A549 (cell line): ENCODE measurements at regions of chr7 and their contacts with region 1.

Region 1: GRCh38 chr7:35985126-35985754 is 167.8 kb upstream of the EEPD1 start:
- DNase-seq: peak; percentile 71 to 77
- ATAC-seq: peak; percentile 96 to 99
- H3K4me3 ChIP-seq: no peak overlapping the region
- H3K27ac ChIP-seq: peak overlapping the region; percentile 54 to 75; a peak in 4 of 6 replicates
- H3K4me1 ChIP-seq: peaks cover 3% of the 10 kb centered on the region; the same call in 1 of the 3 replicates
- CTCF ChIP-seq: peak; percentile 92
- EP300 ChIP-seq: no peak
- POLR2A ChIP-seq: no peak
- RAD21 ChIP-seq: peak; percentile 100

Region 2: DNA sequence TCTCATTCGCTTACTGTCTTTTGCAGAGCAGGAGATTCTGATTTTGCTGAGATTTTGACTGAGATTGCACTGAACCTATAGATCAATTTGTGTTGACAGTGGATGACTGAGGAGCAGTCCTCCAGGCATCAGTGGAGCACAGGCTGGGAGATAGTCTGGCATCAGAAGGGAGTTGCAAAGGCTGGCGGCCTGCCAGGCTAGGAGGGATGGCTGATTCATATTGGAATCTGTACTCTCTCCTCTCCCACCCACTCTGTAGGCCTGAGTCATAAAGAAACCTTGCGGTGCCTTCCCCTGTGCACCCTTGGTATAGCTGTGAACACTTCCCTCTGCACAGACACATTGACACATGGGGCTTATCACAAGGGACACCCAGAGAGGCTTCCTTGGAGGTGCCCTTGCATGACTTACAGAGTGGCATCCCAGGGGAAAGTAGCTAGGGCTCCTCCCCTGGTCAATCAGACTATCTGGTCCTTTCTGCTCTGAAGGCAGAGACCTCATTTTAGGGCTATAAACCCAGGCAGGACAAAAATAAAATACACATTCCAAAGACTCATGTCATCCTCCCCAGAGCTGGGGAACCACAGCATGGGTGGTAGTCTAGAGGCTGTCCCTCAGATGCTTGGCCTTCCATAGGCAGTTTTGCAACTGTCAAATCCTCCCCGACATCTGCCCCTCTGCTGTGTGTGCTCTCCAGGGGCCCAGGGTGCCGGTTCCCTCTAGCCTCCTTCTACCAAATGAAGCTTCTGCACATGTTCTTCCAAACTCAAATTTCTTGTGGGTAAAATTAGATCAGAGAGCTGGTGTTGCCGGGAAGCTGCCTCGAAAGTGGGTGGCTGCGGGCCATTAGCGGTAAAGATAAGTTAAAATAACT is 130.4 kb after region 1 on chr7:
- CTCF ChIA-PET with region 1: interaction called, 11 read pairs
- POLR2A ChIA-PET with region 1: no interaction called
- DNase-seq: peak; percentile 84 to 95
- ATAC-seq: peak; percentile 97 to 98
- H3K4me3 ChIP-seq: no peak overlapping the region
- H3K27ac ChIP-seq: peak overlapping the region; percentile 82 to 88
- H3K4me1 ChIP-seq: peaks cover 55% of the 10 kb centered on the region
- CTCF ChIP-seq: no peak
- EP300 ChIP-seq: peak; percentile 71 to 73; a peak in 2 of 5 replicates
- POLR2A ChIP-seq: no peak
- RAD21 ChIP-seq: peak; percentile 29 to 56; a peak in 4 of 5 replicates

Region 3: GRCh38 chr7:36128448-36129047 is 143.3 kb after region 1 on chr7:
- CTCF ChIA-PET with region 1: interaction called, 10 read pairs
- POLR2A ChIA-PET with region 1: no interaction called
- DNase-seq: peak; percentile 77 to 90
- ATAC-seq: peak; percentile 95 to 97
- H3K4me3 ChIP-seq: peak overlapping the region; percentile 37
- H3K27ac ChIP-seq: peak overlapping the region; percentile 82 to 88
- H3K4me1 ChIP-seq: peaks cover 31% of the 10 kb centered on the region
- CTCF ChIP-seq: peak; percentile 72
- EP300 ChIP-seq: no peak
- POLR2A ChIP-seq: no peak
- RAD21 ChIP-seq: peak; percentile 32 to 47

Region 4: DNA sequence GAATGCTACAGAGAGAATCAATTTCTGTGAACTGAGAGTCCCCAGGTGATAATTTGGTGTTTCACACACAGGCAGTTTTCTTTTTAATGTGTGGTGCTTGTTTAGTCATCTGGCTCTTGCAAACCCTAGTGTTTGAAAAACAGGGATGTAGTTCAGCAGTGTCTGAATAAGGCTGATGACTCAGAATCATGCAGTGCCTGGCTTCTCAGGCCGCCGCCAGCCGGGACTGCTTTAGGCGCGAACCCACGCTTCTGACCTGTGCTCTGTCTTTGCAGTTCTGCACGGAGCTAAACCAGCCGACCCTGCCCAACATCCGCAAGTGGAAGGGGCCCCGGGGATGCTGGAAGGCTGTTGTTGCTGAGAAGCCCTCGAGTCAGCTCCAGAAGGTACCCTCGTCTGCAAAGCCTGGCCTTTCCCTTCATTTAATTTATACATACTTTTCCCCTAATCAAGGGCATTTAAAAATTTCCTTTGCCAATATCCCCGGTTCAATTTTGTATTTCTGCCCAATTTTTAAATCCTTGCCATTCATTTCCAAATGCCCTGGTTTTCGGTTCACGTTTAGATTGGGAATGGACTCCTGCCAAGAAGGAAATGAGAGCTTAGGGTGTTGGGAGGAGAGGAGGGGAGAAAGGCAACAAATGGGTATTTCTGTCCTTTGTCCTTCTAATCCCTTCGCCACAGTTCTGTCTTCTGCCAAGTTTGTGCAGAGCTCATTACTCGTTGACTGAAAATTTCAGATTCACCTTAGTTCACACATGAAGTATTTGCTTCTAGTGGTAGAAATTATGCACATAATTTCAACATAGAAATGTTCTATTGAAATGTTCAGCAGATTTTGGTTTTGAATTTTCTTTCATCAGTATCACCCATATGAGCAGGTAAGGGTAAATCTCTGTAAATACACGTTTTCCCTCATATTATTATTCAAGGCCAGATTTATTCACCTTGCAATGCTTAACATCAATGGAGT is 295.9 kb after region 1 on chr7:
- CTCF ChIA-PET with region 1: interaction called, 198 read pairs
- POLR2A ChIA-PET with region 1: no interaction called
- DNase-seq: peak; percentile 76 to 85
- ATAC-seq: peak; percentile 91 to 92
- H3K4me3 ChIP-seq: peak overlapping the region; percentile 39
- H3K27ac ChIP-seq: peak overlapping the region; percentile 94 to 95
- H3K4me1 ChIP-seq: peaks cover 70% of the 10 kb centered on the region
- CTCF ChIP-seq: no peak
- EP300 ChIP-seq: 0 out of 5 replicates have a peak, but pooled peaks of 1 of the 2 experiments have one; percentile 35
- POLR2A ChIP-seq: no peak
- RAD21 ChIP-seq: peak in 1 of 2 experiments; percentile 38; a peak in 1 of 5 replicates

Region 5: GRCh38 chr7:36303202-36304098 is 318.2 kb after region 1 on chr7:
- CTCF ChIA-PET with region 1: interaction called, 51 read pairs
- POLR2A ChIA-PET with region 1: no interaction called
- DNase-seq: peak; percentile 66 to 87
- ATAC-seq: peak; percentile 70 to 81
- H3K4me3 ChIP-seq: no peak overlapping the region
- H3K27ac ChIP-seq: peak overlapping the region; percentile 54 to 67
- H3K4me1 ChIP-seq: peaks cover 35% of the 10 kb centered on the region
- CTCF ChIP-seq: no peak
- EP300 ChIP-seq: peak; percentile 21 to 74; a peak in 3 of 5 replicates
- POLR2A ChIP-seq: no peak
- RAD21 ChIP-seq: no peak

Region 6: DNA sequence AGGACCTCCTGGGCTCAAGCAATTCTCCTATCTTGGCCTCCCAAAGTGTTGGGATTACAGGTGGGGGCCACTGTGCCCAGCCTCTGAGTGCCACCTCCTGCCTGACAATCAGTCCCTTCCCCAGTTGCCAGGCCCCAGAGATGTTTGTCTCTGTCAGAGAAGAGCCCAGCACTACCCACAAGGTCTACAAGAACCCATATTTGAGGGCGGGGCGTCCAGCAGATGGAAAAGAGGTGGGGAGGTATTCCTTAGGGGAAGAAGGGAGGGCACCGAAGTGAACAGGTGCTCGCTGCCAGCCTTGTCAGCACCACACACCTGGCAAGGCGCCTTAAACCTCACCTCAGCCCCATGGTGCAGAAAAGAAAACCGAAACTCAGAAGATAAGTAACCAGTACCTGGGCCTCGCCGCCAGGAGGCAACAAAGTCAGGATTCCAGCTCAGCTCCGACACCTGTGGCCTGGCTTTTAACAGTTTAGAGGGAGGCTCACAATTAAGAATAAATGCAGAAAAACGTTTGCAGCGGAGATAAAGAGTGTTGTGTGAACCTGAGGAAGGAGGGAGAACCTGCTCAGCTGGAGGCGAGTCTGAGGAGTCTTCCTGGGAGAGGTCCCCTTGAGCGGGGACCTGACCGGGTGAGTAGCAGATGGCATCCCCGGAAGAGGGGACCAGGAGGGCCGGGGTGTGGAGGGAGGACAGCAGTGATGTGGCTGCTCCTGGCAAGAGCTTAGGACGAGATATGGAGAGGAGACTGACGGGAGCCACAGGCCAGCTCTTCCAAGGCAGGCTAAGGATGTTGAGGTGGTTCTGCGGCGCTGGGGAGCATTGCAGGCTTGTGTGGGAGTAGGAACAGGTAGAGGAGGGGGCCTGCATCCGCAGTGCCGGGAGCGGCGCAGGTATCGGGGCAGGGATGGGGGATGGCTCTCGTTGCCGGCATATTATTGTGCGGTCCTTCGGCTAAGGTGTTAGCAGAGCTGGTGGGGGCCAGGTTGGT is 327.4 kb after region 1 on chr7:
- CTCF ChIA-PET with region 1: interaction called, 90 read pairs
- POLR2A ChIA-PET with region 1: no interaction called
- DNase-seq: peak in 1 of 2 experiments; percentile 37
- ATAC-seq: peak; percentile 67 to 81; a peak in 3 of 6 replicates
- H3K4me3 ChIP-seq: no peak overlapping the region
- H3K27ac ChIP-seq: no peak overlapping the region
- H3K4me1 ChIP-seq: no peaks in the 10 kb centered on the region
- CTCF ChIP-seq: peak; percentile 31; the same call in 2 of the 3 replicates
- EP300 ChIP-seq: no peak
- POLR2A ChIP-seq: no peak
- RAD21 ChIP-seq: peak in 1 of 2 experiments; percentile 29; a peak in 1 of 5 replicates

Region 7: GRCh38 chr7:36318116-36318515 is 332.9 kb after region 1 on chr7:
- CTCF ChIA-PET with region 1: interaction called, 90 read pairs
- POLR2A ChIA-PET with region 1: interaction called, 5 read pairs
- DNase-seq: no peak
- ATAC-seq: no peak
- H3K4me3 ChIP-seq: no peak overlapping the region
- H3K27ac ChIP-seq: 0 out of 6 replicates have a peak overlapping the region, but pooled peaks of 1 of the 2 experiments have one; percentile 4
- H3K4me1 ChIP-seq: no peaks in the 10 kb centered on the region
- CTCF ChIP-seq: no peak
- EP300 ChIP-seq: no peak
- POLR2A ChIP-seq: no peak
- RAD21 ChIP-seq: no peak